CD14-positive monocyte (primary cell): ENCODE measurements at regions of chr10 and their contacts with region 1.

Region 1: GRCh38 chr10:79184145-79184625 is 115.4 kb downstream of the ZMIZ1 start:
- DNase-seq: no peak
- H3K4me3 ChIP-seq: no peak overlapping the region
- H3K4me3 Mint-ChIP-seq: no peak overlapping the region
- H3K27ac ChIP-seq: no peak overlapping the region
- H3K27ac Mint-ChIP-seq: peak overlapping the region in 2 of 7 donors; percentile 19 to 57
- H3K4me1 ChIP-seq: peaks cover 14 to 32% of the 10 kb centered on the region in 2 donors
- H3K4me1 Mint-ChIP-seq: peaks cover 45% of the 10 kb centered on the region
- H3K27me3 ChIP-seq: no peaks in the 10 kb centered on the region
- H3K27me3 Mint-ChIP-seq: peaks cover 0 to 4% (median 2%) of the 10 kb centered on the region in 3 donors
- CTCF ChIP-seq: no peak

Region 2: DNA sequence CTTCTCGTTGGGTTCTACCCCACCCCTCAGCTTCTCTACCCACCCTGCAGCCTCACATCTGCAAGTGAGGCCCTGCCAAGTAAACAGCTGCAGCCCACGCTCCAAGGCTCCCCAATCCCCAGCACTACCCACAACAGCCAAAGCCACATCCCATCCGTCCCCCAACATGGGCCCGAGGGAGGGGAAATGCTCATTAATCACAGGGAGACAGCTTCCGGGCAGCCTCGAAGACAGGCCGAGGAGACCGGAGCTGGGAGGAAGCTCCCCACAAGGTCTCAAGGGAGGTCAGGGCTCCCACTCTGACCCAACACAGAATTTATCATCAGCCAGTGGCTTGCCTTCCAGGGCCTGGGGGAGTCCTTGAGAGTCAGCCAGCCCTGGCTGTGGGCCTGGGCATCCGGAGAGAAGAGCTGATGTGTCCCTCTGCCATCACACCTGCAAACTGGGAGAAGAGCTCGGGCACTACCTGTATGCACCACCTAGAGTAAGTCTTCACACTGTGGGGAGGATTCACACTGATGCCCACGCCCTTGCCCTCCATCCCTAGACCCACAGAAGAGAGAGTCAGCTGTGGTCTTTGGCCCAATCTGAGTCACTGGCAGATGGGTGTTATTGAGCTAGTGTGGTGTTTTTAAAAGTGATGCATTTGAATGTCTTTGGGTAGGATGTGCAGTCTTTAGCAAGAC is 230.9 kb before region 1 on chr10:
- intact Hi-C with region 1: loop called in 1 of 2 experiments (anchors 10 kb)
- DNase-seq: peak in 1 of 3 donors; percentile 45
- H3K4me3 ChIP-seq: no peak overlapping the region
- H3K4me3 Mint-ChIP-seq: no peak overlapping the region
- H3K27ac ChIP-seq: no peak overlapping the region
- H3K27ac Mint-ChIP-seq: no peak overlapping the region
- H3K4me1 ChIP-seq: peaks cover 0 to 6% of the 10 kb centered on the region in 2 donors
- H3K4me1 Mint-ChIP-seq: peaks cover 9% of the 10 kb centered on the region
- H3K27me3 ChIP-seq: no peaks in the 10 kb centered on the region
- H3K27me3 Mint-ChIP-seq: peaks cover 1 to 14% (median 3%) of the 10 kb centered on the region in 3 donors
- CTCF ChIP-seq: no peak